Heart left ventricle (tissue), 16 donors: ENCODE measurements at regions of chr11 and their contacts with region 1.

Region 1: DNA sequence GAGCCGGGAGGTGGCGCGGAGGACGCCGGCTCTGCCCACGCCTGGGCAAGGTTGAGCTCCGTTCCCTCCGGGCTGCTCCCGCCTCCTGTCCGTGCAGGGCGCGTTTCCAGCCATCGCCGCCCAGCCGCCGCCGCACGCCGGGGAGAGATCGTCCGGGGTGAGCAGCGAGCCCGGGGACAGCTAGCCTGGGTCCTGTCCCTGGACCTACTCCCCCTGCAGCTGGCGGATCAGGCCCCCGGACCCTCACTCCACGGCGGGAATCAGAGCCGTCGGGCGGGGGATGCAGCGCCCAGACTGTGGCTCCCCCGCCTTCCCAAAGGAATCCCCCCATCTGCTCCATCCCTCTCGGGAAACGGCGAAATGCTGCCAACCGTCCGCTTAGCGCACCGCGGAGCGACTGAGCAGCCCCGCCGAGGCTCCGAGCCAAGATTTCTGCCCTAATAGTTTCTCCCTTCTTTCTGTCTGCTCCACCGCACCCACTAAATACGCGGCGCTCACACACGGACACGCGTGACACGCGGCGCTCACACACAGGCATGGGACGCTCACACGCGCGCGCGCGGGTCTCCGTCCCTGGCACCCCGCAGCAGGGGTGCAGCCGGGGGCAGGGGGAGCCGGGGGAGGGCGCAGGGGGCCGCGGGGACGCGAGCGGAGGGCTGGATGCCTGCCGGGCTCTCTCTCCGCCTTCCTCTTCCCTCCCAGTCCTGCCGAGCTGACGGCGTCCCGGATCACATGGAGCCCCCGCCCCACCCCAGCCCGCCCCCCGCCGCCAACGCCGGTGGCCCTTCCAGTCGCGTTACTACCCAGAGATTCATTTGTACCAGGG is at the start of gene KCNJ5:
- DNase-seq: peak; percentile 45 to 76 (median 53)
- ATAC-seq: peak in 3 of 4 donors; percentile 36 to 56 (median 46)
- H3K4me3 ChIP-seq: peak within 1 kb of the TSS; percentile 33 to 64 (median 55)
- H3K27ac ChIP-seq: peak within 1 kb of the TSS in 11 of 12 donors; percentile 33 to 86 (median 74)
- H3K4me1 ChIP-seq: peaks cover 0 to 56% (median 29%) of the 10 kb centered on the region in 12 donors
- H3K27me3 ChIP-seq: peaks cover 0 to 35% (median 4%) of the 10 kb centered on the region in 9 donors
- CTCF ChIP-seq: peak in 1 of 12 donors; percentile 5
- POLR2A ChIP-seq: no peak
- total RNA-seq, gene KCNJ5: 3.3 to 29.4 (median 7.2) TPM

Region 2: GRCh38 chr11:128905345-128906184 is 14.8 kb after region 1 on chr11:
- intact Hi-C with region 1: loop called in 2 of 10 experiments (anchors 1 to 2 kb)
- DNase-seq: peak in 3 of 5 donors; percentile 50 to 71 (median 64)
- ATAC-seq: peak; percentile 44 to 74 (median 60)
- H3K4me3 ChIP-seq: peak overlapping the region; percentile 45 to 73 (median 62)
- H3K27ac ChIP-seq: peak overlapping the region in 11 of 12 donors; percentile 61 to 88 (median 69)
- H3K4me1 ChIP-seq: peaks cover 0 to 65% (median 24%) of the 10 kb centered on the region in 12 donors
- H3K27me3 ChIP-seq: peaks cover 0 to 3% (median 0%) of the 10 kb centered on the region in 9 donors
- CTCF ChIP-seq: peak; percentile 17 to 63 (median 43)
- POLR2A ChIP-seq: no peak

Region 3: GRCh38 chr11:128948589-128948988 is 57.8 kb after region 1 on chr11:
- intact Hi-C with region 1: loop called in 2 of 10 experiments (anchors 2 kb)
- DNase-seq: no peak
- ATAC-seq: peak in 3 of 4 donors; percentile 63 to 68 (median 63)
- H3K4me3 ChIP-seq: no peak overlapping the region
- H3K27ac ChIP-seq: no peak overlapping the region
- H3K4me1 ChIP-seq: no peaks in the 10 kb centered on the region
- H3K27me3 ChIP-seq: no peaks in the 10 kb centered on the region
- CTCF ChIP-seq: peak in 10 of 12 donors; percentile 9 to 40 (median 28)
- POLR2A ChIP-seq: no peak

Region 4: DNA sequence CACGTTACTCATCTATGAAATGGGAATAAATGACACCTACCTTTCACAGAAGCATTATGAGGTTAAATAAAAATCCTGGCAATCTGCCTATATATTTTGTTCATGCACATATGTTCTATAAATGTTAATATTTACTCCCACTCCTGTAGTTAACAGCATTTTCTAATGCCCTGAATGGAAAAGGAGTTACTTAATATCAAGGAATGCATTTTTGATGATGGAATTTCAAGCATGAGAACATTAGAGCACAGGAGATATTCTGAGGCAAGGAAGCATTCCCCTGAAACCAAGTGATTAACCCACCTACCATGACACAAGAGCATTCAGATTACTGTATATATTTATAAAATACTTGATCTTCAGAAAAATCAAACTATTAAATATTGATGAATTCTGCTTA is 199.3 kb after region 1 on chr11:
- intact Hi-C with region 1: no loop called
- DNase-seq: no peak
- ATAC-seq: no peak
- H3K4me3 ChIP-seq: no peak overlapping the region
- H3K27ac ChIP-seq: no peak overlapping the region
- H3K4me1 ChIP-seq: no peaks in the 10 kb centered on the region
- H3K27me3 ChIP-seq: no peaks in the 10 kb centered on the region
- CTCF ChIP-seq: no peak
- POLR2A ChIP-seq: no peak